ENCODE measurements at regions of chr4 and their contacts with region 1.

Region 1: GRCh38 chr4:26410385-26411293 is 79.6 kb downstream of the CCKAR start:
- DNase-seq: no peak
- H3K4me3 ChIP-seq: no peak overlapping the region
- H3K27ac ChIP-seq: no peak overlapping the region
- H3K4me1 ChIP-seq: peaks cover 0 to 14% (median 10%) of the 10 kb centered on the region in 4 donors
- H3K27me3 ChIP-seq: no peaks in the 10 kb centered on the region
- CTCF ChIP-seq: peak; percentile 54 to 72

Region 2: GRCh38 chr4:26028793-26029567 is 381.7 kb before region 1 on chr4:
- intact Hi-C with region 1: loop called (anchors 5 kb)
- DNase-seq: peak; percentile 67 to 85
- H3K4me3 ChIP-seq: peak overlapping the region in 1 of 2 donors; percentile 31
- H3K27ac ChIP-seq: peak overlapping the region; percentile 17 to 36
- H3K4me1 ChIP-seq: peaks cover 0 to 30% (median 24%) of the 10 kb centered on the region in 4 donors
- H3K27me3 ChIP-seq: no peaks in the 10 kb centered on the region
- CTCF ChIP-seq: peak; percentile 71 to 86

Region 3: DNA sequence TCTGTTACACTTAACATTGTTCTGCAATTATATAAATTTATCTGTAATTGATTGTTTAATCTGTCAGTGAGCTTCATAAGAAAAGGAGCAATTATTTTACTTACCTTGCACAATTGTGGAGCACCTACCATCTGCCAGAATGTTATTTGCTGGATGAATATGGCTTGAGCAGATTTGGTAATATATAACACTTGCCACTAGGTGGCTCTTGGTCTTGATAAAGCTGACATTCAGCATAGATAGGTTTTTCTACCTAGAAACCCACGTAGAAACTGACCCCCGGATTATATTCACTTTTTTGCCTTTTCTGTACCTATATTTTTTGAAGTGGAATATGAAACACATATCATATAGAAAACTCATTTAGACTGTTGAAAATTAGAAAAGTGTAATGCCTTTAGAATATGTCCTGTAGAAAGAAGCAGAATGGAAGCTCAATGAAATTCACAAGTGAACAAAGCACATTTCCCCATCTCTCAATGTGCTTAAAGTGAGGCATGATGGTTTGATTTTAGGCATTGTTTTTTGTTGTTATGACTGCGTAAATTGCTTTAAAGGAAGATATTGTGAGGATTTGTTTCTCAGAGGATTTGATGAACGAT is 80.4 kb before region 1 on chr4:
- intact Hi-C with region 1: loop called (anchors 5 kb)
- DNase-seq: no peak
- H3K4me3 ChIP-seq: no peak overlapping the region
- H3K27ac ChIP-seq: no peak overlapping the region
- H3K4me1 ChIP-seq: peaks cover 0 to 7% (median 2%) of the 10 kb centered on the region in 4 donors
- H3K27me3 ChIP-seq: no peaks in the 10 kb centered on the region
- CTCF ChIP-seq: peak; percentile 70